ENCODE measurements at regions of chr1 and their contacts with region 1.

Region 1: GRCh38 chr1:117367047-117368018 is at the start of gene MAN1A2:
- DNase-seq: peak; percentile 91
- ATAC-seq: peak; percentile 92 to 97 (median 96)
- H3K4me3 ChIP-seq: peak within 1 kb of the TSS; percentile 78 to 96 (median 90)
- H3K27ac ChIP-seq: peak within 1 kb of the TSS; percentile 93 to 100 (median 98)
- H3K4me1 ChIP-seq: peaks cover 0 to 67% (median 58%) of the 10 kb centered on the region in 9 donors
- H3K27me3 ChIP-seq: no peaks in the 10 kb centered on the region
- CTCF ChIP-seq: no peak
- total RNA-seq, gene MAN1A2: 22.6 to 37.3 (median 26.3) TPM

Region 2: DNA sequence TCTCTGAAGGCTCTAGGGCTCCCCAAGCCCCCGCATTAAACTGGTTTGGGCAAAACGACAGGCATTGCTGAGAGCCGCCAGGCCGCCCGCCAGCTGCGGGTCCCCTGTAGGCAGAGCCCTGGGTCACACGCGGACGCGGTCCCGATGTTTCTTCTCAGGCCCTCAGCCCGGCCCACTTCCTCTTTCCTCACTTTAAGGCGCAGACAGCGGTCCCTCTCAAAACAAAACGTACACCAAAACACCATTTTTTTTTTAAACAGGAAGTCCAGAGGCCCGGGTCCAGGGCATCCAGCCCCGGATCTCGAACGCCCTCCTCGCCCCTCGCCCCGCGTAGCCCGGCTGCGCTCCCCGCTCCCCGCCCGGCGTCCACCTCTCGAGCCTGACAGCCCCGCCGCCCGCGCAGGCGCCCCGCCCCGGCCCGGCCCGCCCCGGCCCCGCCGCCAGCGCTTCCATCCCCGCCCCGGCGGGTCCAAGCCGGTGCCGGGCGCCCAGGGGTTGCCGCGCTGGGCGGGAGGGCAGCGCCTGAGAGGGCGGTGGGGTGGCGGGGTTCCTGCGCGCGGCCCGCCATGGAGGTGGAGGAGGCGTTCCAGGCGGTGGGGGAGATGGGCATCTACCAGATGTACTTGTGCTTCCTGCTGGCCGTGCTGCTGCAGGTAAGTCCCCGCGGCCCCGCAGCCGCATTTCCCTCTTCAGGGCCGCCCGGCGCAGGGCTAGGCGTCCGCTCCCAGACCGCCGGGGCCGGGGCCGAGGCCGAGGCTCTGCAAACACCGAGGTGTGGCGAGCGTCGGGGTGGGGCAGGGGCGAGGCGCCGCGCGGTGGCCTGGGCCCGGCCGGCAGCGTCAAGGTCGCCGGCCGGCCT is 1391.0 kb before region 1 on chr1 and contains the start of gene SLC22A15:
- intact Hi-C with region 1: no loop called
- DNase-seq: peak; percentile 58 to 72
- ATAC-seq: peak; percentile 78 to 92 (median 84)
- H3K4me3 ChIP-seq: peak within 1 kb of the TSS; percentile 61 to 84 (median 72)
- H3K27ac ChIP-seq: peak within 1 kb of the TSS; percentile 70 to 91 (median 85)
- H3K4me1 ChIP-seq: peaks cover 0 to 41% (median 6%) of the 10 kb centered on the region in 9 donors
- H3K27me3 ChIP-seq: peaks cover 0 to 8% (median 0%) of the 10 kb centered on the region in 7 donors
- CTCF ChIP-seq: no peak
- total RNA-seq, gene SLC22A15: 5.7 to 13.1 (median 7.9) TPM

Region 3: DNA sequence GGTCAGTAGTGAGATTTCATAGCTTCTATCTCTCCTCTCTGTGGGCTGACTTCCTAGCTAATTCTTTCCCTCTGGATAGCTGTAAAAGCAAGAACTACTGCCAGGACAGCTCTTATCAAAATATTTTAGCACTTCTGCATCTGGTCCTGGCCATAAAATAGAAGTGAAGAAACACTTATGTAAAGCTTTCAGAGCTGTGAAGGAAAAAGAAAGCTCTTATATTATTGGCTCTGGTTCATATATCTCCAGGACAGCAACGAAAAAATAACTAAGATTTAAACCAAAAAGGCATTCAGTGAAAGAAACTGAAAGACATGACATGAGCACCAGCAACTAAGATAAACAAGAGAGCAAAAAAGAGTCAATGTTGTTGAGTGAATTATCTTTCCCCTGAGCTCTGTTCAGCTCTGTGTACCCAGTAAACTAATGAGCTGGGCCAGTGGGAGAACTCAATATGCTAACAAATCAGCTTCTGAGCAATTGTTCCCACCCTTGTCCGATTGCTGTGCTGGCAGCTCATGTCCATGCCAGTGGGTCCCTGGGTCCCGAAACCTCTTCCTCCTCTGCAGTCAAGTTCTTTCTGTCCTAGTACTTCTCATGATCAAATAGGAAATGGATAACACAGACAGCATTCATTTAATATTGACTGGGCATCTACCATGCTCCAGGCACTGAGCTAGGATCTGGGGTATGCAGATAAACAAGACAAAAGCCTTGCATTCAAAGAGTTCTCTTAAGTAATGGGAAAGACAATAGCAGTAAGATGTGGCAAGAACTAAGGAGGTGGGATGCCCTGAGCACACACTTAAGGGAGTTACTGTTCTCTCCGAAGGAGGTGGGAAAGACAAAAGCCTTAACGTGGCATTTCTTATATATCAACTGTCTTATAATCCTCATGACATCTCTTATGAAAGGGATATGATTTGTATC is 45.4 kb before region 1 on chr1:
- intact Hi-C with region 1: no loop called
- DNase-seq: no peak
- ATAC-seq: peak; percentile 45 to 91 (median 67)
- H3K4me3 ChIP-seq: peak overlapping the region in 2 of 10 donors; percentile 4 to 19
- H3K27ac ChIP-seq: peak overlapping the region in 7 of 10 donors; percentile 1 to 69 (median 32)
- H3K4me1 ChIP-seq: peaks cover 0 to 23% (median 8%) of the 10 kb centered on the region in 9 donors
- H3K27me3 ChIP-seq: peaks cover 0 to 6% (median 0%) of the 10 kb centered on the region in 7 donors
- CTCF ChIP-seq: no peak

Region 4: DNA sequence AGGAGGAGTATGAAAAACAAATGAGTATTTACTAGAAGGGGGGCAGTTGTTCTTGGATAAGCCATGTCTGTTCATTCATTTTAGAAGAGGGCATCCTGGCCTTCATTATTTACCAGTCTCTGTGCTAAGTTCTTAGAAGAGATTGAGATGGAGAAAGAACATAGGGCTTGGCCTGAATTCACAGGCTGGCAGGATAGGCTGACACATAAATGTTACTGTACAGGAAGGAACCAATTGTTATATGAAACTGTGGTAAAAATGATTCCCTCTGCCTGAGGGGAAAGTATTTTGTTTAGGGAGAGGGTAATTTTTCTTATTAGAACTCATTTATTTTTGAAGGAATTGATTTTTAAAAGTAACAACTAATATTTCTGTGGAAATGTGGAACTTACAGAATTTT is 99.4 kb after region 1 on chr1:
- intact Hi-C with region 1: loop called in 1 of 10 experiments (anchors 5 kb)
- DNase-seq: no peak
- ATAC-seq: no peak
- H3K4me3 ChIP-seq: no peak overlapping the region
- H3K27ac ChIP-seq: no peak overlapping the region
- H3K4me1 ChIP-seq: no peaks in the 10 kb centered on the region
- H3K27me3 ChIP-seq: no peaks in the 10 kb centered on the region
- CTCF ChIP-seq: no peak

Region 5: GRCh38 chr1:117605774-117606648 is 238.7 kb after region 1 on chr1 and contains the start of gene TENT5C:
- intact Hi-C with region 1: loop called in 2 of 10 experiments (anchors 5 to 10 kb)
- DNase-seq: peak; percentile 97
- ATAC-seq: peak; percentile 96 to 99 (median 97)
- H3K4me3 ChIP-seq: peak within 1 kb of the TSS; percentile 57 to 94 (median 82)
- H3K27ac ChIP-seq: peak within 1 kb of the TSS in 9 of 10 donors; percentile 70 to 90 (median 82)
- H3K4me1 ChIP-seq: peaks cover 6 to 52% (median 30%) of the 10 kb centered on the region in 9 donors
- H3K27me3 ChIP-seq: peaks cover 0 to 4% (median 0%) of the 10 kb centered on the region in 7 donors
- CTCF ChIP-seq: no peak
- total RNA-seq, gene TENT5C: 3.1 to 23.1 (median 13.0) TPM

Region 6: GRCh38 chr1:117929173-117929989 is 562.0 kb after region 1 on chr1 and contains the starts of genes GDAP2 and WDR3:
- intact Hi-C with region 1: loop called in 1 of 10 experiments (anchors 10 kb)
- DNase-seq: peak; percentile 94 to 97
- ATAC-seq: peak; percentile 97 to 99 (median 99)
- H3K4me3 ChIP-seq: peak within 1 kb of the TSS; percentile 79 to 97 (median 90)
- H3K27ac ChIP-seq: peak within 1 kb of the TSS; percentile 65 to 95 (median 89)
- H3K4me1 ChIP-seq: peaks cover 0 to 58% (median 36%) of the 10 kb centered on the region in 9 donors
- H3K27me3 ChIP-seq: no peaks in the 10 kb centered on the region
- CTCF ChIP-seq: peak in 1 of 9 donors; percentile 5
- total RNA-seq, gene GDAP2: 10.4 to 24.2 (median 20.3) TPM
- total RNA-seq, gene WDR3: 9.1 to 16.8 (median 13.1) TPM

Measured in heart right ventricle (tissue), 16 donors.